Activated CD4-positive, alpha-beta T cell treated with anti-CD3 and anti-CD28 coated beads, Interleukin-2, amount 10 ng/mL, durations not matched to agents 24 days and 14 days (primary cell): ENCODE measurements at regions of chr11 and their contacts with region 1.

Region 1: DNA sequence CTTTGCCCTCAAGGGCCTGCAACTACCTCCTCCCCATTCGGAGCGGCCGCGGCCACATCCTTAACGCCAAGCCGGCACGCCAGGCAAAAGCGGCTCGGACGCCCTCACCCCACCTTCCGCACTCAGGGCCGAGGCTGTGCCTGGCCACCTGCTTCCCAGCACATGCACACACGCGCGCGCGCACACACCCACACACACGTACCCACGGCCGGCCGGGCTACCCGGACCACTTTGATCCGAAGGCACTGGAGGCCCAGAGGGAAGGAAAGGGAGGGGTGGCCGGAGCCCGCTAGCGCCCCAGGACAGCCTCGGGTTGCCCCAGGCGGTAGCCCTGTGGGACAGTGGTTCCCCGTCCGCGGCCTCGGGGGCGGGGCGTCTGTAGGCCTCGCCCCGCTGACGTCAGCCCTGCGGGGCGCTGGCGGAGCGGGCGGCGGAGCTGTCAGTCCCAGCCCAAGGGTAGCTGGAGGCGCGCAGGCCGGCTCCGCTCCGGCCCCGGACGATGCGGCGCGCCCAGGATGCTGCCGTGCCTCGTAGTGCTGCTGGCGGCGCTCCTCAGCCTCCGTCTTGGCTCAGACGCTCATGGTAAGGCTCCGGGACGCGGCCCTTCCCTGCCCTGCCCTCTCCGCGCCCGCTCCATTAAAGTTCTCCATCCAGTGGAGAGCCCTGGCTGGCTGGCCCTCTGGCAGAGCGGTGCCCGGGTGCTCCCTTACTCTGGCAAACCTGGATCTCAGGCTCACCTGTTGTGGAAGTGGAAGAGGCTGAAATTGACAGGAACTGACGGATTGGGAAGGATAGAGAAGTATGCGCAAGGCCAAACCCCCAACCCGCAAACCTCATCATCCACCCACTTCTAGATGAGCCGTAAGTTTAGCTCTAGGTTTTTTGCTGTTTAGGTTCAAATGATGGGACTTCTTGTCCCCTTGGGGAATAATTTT is at the start of gene IL10RA:
- DNase-seq: peak; percentile 98
- H3K4me3 Mint-ChIP-seq: peak within 1 kb of the TSS; percentile 88
- H3K27ac Mint-ChIP-seq: peak within 1 kb of the TSS; percentile 98
- H3K4me1 Mint-ChIP-seq: peaks cover 69% of the 10 kb centered on the region
- H3K27me3 Mint-ChIP-seq: no peaks in the 10 kb centered on the region
- total RNA-seq, gene IL10RA: 86.6 and 89.9 TPM in 2 replicates

Region 2: GRCh38 chr11:117828611-117829368 is 157.4 kb before region 1 on chr11:
- intact Hi-C with region 1: loop called (anchors 1 kb)
- DNase-seq: peak; percentile 92
- H3K4me3 Mint-ChIP-seq: peak overlapping the region; percentile 73
- H3K27ac Mint-ChIP-seq: peak overlapping the region; percentile 88
- H3K4me1 Mint-ChIP-seq: peaks cover 57% of the 10 kb centered on the region
- H3K27me3 Mint-ChIP-seq: no peaks in the 10 kb centered on the region

Region 3: DNA sequence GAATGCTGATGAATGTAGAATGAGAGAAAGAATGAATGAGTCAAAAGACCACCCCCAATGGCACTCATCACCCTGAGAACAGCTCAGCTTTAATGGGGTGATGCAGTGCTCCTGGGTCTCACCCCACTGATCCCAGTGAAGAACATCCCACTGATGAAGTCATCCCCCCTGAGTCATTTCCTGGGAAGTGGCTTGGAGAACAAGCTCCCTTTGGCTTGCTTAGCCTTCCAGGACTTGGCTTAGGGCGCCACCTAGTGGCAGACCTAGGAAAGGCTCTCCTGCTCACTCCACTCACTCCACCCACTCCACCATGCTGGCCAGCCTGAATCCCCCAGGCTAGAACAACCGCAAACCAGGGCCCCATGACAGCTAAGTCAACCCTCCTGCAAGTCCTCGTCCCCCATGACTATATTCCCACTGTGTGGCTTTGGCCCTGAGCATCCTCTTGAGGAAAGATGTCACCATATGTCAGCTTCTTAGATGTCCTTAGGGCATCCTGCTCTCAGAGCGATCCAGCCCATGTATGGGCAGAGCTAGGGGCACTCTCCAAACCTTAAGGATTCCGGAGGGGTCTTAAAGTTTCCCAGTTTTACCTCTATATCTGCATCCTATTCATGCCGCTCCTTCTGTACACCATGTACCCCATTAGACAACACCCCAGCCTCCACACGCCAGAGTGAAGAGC is 39.2 kb before region 1 on chr11:
- intact Hi-C with region 1: loop called (anchors 1 kb)
- DNase-seq: peak; percentile 95
- H3K4me3 Mint-ChIP-seq: peak overlapping the region; percentile 4
- H3K27ac Mint-ChIP-seq: peak overlapping the region; percentile 67
- H3K4me1 Mint-ChIP-seq: peaks cover 79% of the 10 kb centered on the region
- H3K27me3 Mint-ChIP-seq: peaks cover 3% of the 10 kb centered on the region

Region 4: DNA sequence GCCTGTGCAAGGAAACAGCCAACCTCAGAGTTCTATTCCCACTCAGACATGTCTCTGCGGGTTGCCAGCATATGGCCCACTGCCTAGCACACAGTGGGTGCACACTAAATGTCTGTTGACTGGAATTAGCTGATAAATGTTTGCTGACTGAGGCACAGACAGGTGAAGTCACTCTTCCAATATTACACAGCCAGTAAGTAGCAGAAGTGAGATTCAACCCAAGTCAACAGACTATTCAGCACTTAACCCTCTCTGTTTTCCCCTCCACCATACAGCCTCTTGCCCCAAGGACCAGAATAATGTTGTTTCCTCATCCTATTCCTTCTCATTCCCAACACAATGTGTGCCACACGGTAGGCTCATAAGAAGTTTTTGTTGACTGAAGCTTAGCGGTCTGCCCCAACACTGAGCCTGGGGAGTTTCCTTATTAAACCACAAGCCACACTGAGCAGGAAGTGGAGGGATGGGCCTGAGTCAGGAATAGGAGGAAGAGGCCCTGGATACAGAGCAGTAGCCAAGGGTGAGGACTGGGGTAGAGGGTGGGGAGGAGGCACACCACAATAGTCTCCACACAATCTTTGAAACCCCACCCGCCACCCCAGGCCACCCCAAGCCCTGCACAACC is 15.7 kb before region 1 on chr11:
- intact Hi-C with region 1: loop called (anchors 1 kb)
- DNase-seq: peak; percentile 83
- H3K4me3 Mint-ChIP-seq: peak overlapping the region; percentile 60
- H3K27ac Mint-ChIP-seq: peak overlapping the region; percentile 78
- H3K4me1 Mint-ChIP-seq: peaks cover 64% of the 10 kb centered on the region
- H3K27me3 Mint-ChIP-seq: no peaks in the 10 kb centered on the region

Region 5: DNA sequence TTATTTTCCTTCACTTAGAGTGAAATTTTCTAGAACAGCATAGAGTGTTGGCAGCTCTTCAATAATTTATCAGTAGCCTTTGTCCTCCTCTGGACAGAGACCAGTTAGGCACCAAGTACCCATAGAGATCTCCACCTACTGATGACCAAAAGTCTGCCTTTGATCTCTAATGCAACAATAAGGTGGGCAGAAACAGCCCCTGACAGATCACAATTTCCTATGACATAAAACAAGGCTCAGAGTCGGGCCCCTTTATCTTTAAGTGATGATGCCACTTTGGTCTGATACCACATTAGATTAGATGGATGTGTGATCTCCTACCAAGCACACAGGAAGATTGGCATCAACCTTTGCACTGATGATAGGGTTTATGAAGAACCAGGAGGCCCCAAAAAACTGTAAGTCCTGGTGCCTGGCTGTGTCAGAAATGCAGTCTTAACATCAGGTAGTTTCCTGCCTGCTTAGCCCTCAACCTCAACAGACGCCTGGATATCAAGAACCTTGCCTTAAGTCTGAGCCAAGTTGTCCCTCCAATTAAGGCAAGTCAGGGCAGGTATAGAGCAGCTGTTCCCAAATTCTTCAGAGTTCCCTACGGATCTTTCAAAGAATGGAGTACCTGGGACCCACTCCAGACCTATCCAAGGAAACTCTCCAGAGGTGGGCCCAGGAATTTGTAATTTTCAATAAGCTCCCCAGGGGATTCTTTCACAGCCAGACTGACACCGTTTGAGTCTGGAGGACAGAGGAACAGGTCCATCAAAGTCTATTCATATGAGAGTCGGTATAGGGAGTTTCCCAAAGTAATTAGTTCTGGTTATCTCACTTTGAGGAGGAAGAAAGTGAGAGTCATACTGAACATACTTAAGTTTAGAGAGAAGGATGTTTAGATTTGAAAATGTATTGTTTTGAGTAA is 60.1 kb after region 1 on chr11:
- intact Hi-C with region 1: loop called (anchors 1 kb)
- DNase-seq: peak; percentile 76
- H3K4me3 Mint-ChIP-seq: peak overlapping the region; percentile 51
- H3K27ac Mint-ChIP-seq: peak overlapping the region; percentile 87
- H3K4me1 Mint-ChIP-seq: peaks cover 75% of the 10 kb centered on the region
- H3K27me3 Mint-ChIP-seq: no peaks in the 10 kb centered on the region

Region 6: GRCh38 chr11:118098996-118099837 is 113.0 kb after region 1 on chr11:
- intact Hi-C with region 1: no loop called
- DNase-seq: no peak
- H3K4me3 Mint-ChIP-seq: no peak overlapping the region
- H3K27ac Mint-ChIP-seq: no peak overlapping the region
- H3K4me1 Mint-ChIP-seq: no peaks in the 10 kb centered on the region
- H3K27me3 Mint-ChIP-seq: peaks cover 25% of the 10 kb centered on the region